GM12878 (cell line): ENCODE measurements at regions of chr14 and their contacts with region 1.

Region 1: GRCh38 chr14:58749066-58749669 is 111.4 kb downstream of the DACT1 start:
- DNase-seq: peak; percentile 86
- ATAC-seq: peak; percentile 95
- H3K4me3 ChIP-seq: no peak overlapping the region
- H3K27ac ChIP-seq: no peak overlapping the region
- H3K4me1 ChIP-seq: no peaks in the 10 kb centered on the region
- H3K27me3 ChIP-seq: no peaks in the 10 kb centered on the region
- CTCF ChIP-seq: no peak
- EP300 ChIP-seq: peak; percentile 91 to 93
- POLR2A ChIP-seq: no peak
- RAD21 ChIP-seq: no peak

Region 2: DNA sequence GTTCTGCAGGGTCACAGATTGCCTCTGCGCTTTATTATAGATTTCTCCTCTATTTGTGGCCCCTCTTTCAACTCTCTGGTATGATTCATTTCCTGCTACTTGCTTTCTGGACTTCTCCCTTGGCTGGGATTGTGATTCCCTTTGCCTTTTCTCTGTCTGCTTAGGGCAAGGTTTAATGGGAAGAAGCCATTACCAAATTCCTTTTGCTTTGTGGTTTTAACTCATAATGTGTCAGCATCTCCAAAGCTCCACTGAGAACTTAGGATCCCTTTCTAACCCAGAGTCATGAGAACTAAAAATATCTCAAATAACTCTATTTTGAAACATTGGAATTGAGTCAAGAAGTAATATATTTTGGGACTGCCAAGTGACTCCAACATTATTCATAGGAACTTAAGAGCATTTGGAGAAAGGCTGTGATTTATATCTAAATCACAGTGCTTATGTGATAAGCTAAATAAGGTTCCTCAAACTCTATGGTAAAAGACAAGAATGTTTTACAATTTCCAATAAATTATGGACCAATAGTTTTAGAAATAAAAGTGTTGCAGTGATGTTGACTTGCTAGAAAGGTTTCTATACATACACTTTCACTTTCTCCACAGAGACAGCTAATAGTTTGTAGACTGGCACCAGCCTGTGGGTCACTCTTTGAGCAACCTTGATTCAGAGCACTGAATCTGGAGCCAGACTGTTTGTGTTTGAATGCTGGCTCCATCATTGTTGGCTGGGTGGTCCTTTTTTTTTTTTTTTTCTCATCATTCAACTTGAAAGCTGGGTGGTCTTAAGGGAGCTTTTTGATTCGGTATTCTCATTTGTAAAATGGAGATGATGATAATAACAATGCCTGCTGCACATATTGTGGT is 17.5 kb before region 1 on chr14:
- CTCF ChIA-PET with region 1: interaction called, 3 read pairs
- POLR2A ChIA-PET with region 1: interaction called, 8 read pairs
- RAD21 ChIA-PET with region 1: interaction called, 9 read pairs
- SMC1A ChIA-PET with region 1: interaction called, 16 read pairs
- in situ Hi-C with region 1: no loop called
- intact Hi-C with region 1: no loop called
- DNase-seq: no peak
- ATAC-seq: no peak
- H3K4me3 ChIP-seq: no peak overlapping the region
- H3K27ac ChIP-seq: no peak overlapping the region
- H3K4me1 ChIP-seq: no peaks in the 10 kb centered on the region
- H3K27me3 ChIP-seq: no peaks in the 10 kb centered on the region
- CTCF ChIP-seq: no peak
- EP300 ChIP-seq: no peak
- POLR2A ChIP-seq: no peak
- RAD21 ChIP-seq: no peak

Region 3: GRCh38 chr14:58738189-58738836 is 10.9 kb before region 1 on chr14:
- CTCF ChIA-PET with region 1: interaction called, 5 read pairs
- POLR2A ChIA-PET with region 1: interaction called, 8 read pairs
- RAD21 ChIA-PET with region 1: interaction called, 9 read pairs
- SMC1A ChIA-PET with region 1: interaction called, 19 read pairs
- in situ Hi-C with region 1: no loop called
- intact Hi-C with region 1: no loop called
- DNase-seq: no peak
- ATAC-seq: no peak
- H3K4me3 ChIP-seq: no peak overlapping the region
- H3K27ac ChIP-seq: no peak overlapping the region
- H3K4me1 ChIP-seq: no peaks in the 10 kb centered on the region
- H3K27me3 ChIP-seq: no peaks in the 10 kb centered on the region
- CTCF ChIP-seq: no peak
- EP300 ChIP-seq: no peak
- POLR2A ChIP-seq: no peak
- RAD21 ChIP-seq: no peak

Region 4: DNA sequence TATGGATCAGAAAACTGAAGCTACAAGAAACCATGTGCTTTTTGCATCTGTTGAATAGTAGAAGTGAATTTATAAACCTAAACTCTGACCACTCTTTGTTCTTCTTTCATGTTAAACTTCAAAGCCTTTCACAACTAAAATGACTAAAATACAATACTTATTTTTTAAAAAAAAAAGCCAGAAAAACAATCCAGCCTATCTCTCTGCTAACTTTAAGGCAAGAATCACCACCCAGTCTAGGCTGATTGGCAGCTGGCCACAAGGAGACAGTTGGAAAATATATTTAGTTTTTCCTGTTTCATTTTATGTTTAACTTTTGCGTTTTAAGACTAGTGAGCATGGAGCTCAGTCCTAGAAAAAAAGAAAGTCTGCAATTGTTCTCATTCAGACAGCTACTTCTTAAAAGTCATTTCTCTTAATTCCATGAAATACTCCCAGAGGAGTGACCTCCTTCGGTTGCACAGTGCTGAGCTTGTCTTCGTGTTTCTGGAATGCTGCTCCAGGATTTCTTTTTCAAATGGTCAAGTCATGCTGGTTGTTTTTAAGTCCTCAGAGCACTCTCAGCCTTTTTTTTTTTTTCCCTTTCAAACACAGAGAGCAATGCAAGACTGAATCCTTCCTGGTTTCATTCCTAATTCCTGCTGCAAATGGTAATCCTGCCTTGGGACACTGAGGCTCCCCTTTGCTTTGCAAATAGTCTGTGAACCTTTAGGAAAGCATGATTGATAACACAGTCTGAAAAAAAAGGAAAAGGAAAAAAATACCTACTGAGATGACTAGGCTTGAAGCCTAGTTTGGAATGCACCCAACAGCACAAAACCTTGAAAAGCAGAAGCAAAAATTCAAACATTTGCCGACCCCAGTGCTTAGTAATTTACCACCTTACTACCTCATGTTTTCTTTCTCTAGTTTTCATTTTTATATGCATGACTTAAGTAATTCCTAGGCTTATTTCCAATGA is 206.0 kb after region 1 on chr14:
- CTCF ChIA-PET with region 1: no interaction called
- POLR2A ChIA-PET with region 1: no interaction called
- RAD21 ChIA-PET with region 1: interaction called, 3 read pairs
- SMC1A ChIA-PET with region 1: interaction called, 4 read pairs
- in situ Hi-C with region 1: no loop called
- intact Hi-C with region 1: loop called (anchors 5 kb)
- DNase-seq: peak; percentile 55
- ATAC-seq: peak; percentile 81
- H3K4me3 ChIP-seq: peak overlapping the region; percentile 38; the same call in 1 of the 2 replicates
- H3K27ac ChIP-seq: peak overlapping the region; percentile 86
- H3K4me1 ChIP-seq: peaks cover 18% of the 10 kb centered on the region
- H3K27me3 ChIP-seq: no peaks in the 10 kb centered on the region
- CTCF ChIP-seq: no peak
- EP300 ChIP-seq: peak; percentile 68 to 77; a peak in 3 of 4 replicates
- POLR2A ChIP-seq: no peak
- RAD21 ChIP-seq: no peak